Endothelial cell of umbilical vein (primary cell): ENCODE measurements at regions of chr6 and their contacts with region 1.

Region 1: DNA sequence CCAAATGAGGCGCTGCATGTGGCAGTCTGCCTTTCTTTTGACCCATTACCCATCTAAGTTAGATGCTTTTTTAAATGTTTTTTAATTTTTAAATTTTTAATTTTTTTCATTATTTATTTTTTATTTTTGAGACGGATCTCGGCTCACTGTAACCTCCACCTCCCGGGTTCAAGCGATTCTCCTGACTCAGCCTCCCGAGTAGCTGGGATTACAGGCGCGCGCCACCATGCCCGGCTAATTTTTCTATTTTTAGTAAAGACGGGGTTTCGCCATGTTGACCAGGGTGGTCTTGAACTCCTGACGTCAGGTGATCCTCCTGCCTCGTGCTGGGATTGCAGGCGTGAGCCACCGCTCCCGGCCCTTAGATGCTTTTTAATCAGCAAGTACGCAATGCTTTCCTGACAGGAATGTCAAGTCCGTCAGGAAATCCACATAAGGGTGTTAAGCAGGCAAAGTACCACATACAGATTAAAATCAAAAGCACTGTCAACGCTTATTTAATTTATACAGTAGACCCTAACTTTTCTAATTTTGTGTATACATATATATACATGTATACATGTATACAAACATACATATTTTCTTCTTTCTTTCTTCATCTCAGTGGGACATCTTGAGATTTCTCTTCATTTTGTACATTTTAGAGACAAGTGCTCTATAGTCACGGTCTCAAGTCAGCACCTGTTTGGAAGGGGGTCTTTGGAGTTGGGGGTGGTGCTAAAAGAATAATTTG is 995 bp upstream of the GSTA4 start:
- DNase-seq: peak; percentile 69
- H3K4me3 ChIP-seq: peak overlapping the region in 1 of 3 experiments; percentile 19
- H3K27ac ChIP-seq: no peak overlapping the region
- H3K4me1 ChIP-seq: peaks cover 13% of the 10 kb centered on the region
- H3K27me3 ChIP-seq: no peaks in the 10 kb centered on the region
- CTCF ChIP-seq: no peak
- POLR2A ChIP-seq: no peak

Region 2: DNA sequence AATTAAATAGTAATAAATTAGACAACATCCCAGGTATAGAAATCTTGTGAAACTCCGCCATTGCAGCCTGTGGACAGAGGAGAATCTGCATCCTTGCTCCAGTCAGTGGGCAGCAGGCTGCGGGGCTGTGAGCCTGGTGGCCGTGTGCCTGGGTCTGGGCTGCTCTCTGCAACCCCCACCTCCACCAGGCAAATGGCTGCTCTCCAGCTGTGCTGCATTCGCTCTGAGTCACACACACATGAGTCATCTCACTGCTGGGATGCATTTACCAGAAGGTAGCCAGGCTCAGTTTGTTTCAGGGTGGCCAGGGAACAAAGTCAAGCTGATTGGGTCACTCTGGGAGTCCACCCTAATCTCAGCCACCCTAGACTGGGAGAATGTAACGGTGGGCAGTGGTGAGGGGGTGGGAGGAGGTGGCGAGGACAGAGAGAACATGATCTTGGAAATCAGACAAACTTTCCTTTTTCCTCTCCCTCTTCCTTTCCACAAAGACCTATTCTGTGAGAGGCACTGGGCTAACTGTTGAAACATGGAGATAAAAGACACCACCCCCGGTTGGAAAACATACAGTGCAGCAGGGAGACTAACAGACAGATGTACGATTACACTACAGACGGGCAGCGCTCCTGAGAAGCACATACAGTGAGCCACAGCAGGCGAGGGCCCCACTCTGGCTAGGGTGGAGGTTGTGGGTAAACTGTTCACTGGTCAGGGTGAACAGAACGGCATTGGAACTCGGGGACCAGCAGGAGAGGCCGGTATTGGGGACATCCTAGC is 478.4 kb before region 1 on chr6:
- CTCF ChIA-PET with region 1: no interaction called
- POLR2A ChIA-PET with region 1: no interaction called
- dilution Hi-C with region 1: no loop called
- intact Hi-C with region 1: loop called (anchors 10 kb)
- DNase-seq: peak; percentile 94
- H3K4me3 ChIP-seq: no peak overlapping the region
- H3K27ac ChIP-seq: peak overlapping the region; percentile 97
- H3K4me1 ChIP-seq: peaks cover 69% of the 10 kb centered on the region
- H3K27me3 ChIP-seq: no peaks in the 10 kb centered on the region
- CTCF ChIP-seq: no peak
- POLR2A ChIP-seq: peak; percentile 27

Region 3: DNA sequence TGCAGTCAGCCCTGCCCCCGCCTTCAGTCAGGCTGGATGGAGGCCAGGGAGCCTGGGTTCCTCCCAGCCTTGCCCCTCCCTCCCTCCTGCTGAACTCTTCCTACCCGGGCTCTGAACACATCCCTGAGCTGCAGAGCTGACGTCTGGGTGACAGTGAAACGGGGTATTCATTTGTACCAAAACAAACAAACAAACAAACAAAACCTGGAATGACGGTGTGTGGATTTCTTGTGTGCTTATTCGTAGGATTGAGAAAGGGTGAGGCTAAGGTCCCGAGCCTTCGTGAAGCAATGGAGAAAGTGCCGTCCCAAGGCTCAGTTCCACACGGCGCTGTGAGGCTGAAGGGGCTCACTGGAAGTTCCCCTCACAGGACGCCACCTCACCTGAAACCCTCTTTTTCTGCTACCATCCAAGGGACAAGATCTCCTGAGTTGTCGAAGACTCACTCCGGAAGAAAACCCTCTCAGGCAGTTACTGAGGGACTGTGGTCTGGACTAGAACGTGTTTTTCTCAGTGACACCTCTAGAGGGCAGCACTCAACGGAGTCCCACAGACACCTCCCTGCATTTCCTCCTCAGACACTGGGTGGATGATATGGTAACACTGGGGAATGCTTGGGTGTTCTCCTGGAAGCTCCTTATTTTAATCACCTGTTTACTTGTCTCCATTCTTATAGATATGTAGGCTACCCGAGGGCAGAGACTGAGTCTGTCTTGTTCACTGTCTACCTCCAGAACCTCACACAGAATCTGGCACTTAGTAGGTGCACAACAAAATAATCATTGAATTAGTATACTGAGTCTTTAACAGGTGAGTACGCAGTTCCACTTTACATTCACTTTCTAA is 113.9 kb before region 1 on chr6:
- CTCF ChIA-PET with region 1: interaction called, 11 read pairs
- POLR2A ChIA-PET with region 1: no interaction called
- dilution Hi-C with region 1: no loop called
- intact Hi-C with region 1: loop called (anchors 1 kb)
- DNase-seq: peak; percentile 65
- H3K4me3 ChIP-seq: peak overlapping the region in 2 of 3 experiments; percentile 45 to 67
- H3K27ac ChIP-seq: no peak overlapping the region
- H3K4me1 ChIP-seq: peaks cover 4% of the 10 kb centered on the region
- H3K27me3 ChIP-seq: peaks cover 1 to 2% of the 10 kb centered on the region in 2 experiments
- CTCF ChIP-seq: peak; percentile 81 to 88
- POLR2A ChIP-seq: no peak

Region 4: DNA sequence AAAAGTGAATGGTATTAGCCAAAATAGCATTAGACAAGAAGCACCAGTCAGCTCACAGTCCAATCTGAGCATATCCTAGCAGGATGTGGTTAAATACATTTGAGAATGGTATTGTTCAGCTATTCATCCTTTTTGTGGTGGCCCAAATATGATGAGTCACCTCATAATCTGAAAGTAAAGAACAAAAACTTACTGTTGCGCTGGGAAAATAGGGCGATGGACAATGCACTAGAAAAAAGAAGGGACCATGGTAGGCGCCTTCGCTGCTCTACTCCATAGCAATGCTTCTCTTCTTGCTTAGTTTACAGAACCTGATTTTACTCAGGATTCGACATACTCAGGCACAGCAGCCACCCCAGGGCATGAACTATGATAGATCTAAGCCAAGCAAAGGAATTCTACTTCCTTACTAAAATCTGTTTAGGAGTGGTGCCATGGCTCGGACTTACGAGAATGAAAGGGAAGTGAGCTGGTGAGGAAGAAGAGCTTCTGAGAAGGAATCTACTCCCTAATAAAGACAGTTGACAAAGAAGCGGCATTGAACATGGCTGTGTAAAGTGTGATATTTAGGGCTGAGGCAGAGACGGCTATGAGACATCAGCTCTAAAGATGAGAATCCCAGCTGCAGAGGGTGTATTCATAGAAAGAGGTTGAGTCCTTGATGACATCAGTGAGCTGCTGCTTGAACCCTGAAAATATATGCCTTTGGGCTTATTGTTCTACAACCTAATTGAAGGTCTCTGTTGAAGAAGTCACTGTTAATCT is 52.5 kb after region 1 on chr6:
- CTCF ChIA-PET with region 1: interaction called, 26 read pairs
- POLR2A ChIA-PET with region 1: no interaction called
- dilution Hi-C with region 1: no loop called
- intact Hi-C with region 1: no loop called
- DNase-seq: peak; percentile 61
- H3K4me3 ChIP-seq: no peak overlapping the region
- H3K27ac ChIP-seq: peak overlapping the region; percentile 58
- H3K4me1 ChIP-seq: peaks cover 13% of the 10 kb centered on the region
- H3K27me3 ChIP-seq: no peaks in the 10 kb centered on the region
- CTCF ChIP-seq: no peak
- POLR2A ChIP-seq: no peak

Region 5: GRCh38 chr6:53484476-53485280 is 488.6 kb after region 1 on chr6:
- CTCF ChIA-PET with region 1: interaction called, 3 read pairs
- POLR2A ChIA-PET with region 1: interaction called, 3 read pairs
- dilution Hi-C with region 1: no loop called
- intact Hi-C with region 1: loop called (anchors 2 kb)
- DNase-seq: peak; percentile 84
- H3K4me3 ChIP-seq: no peak overlapping the region
- H3K27ac ChIP-seq: no peak overlapping the region
- H3K4me1 ChIP-seq: no peaks in the 10 kb centered on the region
- H3K27me3 ChIP-seq: peaks cover 10 to 25% of the 10 kb centered on the region in 2 experiments
- CTCF ChIP-seq: peak; percentile 73 to 75
- POLR2A ChIP-seq: no peak